GM13977 (cell line): ENCODE measurements at regions of chr5 and their contacts with region 1.

Region 1: DNA sequence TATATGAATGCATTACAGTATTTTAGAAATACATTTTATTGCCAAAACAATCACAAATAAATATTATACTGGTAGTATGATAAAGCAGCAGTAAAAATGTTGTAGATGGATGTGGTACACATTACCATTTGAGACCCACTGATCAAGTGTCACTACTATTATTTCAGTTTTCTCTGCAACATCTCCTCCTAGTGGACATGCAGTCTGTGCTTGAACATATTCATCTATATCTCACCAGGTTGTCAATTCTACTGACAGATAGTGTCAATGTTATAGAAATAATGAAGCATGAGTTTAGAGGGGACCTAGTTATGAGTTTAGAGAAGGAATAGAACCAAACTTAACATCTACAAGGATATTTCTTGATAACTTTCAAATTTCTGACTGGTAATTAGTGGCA is 39.2 kb upstream of the ELOVL7 start:
- DNase-seq: peak; percentile 44
- CTCF ChIP-seq: peak; percentile 55

Region 2: GRCh38 chr5:60604771-60605170 is 278.5 kb before region 1 on chr5:
- in situ Hi-C with region 1: no loop called
- DNase-seq: no peak
- CTCF ChIP-seq: no peak

Region 3: GRCh38 chr5:60677844-60678664 is 205.2 kb before region 1 on chr5:
- in situ Hi-C with region 1: loop called (anchors 10 kb)
- DNase-seq: peak; percentile 43
- CTCF ChIP-seq: peak; percentile 58

Region 4: DNA sequence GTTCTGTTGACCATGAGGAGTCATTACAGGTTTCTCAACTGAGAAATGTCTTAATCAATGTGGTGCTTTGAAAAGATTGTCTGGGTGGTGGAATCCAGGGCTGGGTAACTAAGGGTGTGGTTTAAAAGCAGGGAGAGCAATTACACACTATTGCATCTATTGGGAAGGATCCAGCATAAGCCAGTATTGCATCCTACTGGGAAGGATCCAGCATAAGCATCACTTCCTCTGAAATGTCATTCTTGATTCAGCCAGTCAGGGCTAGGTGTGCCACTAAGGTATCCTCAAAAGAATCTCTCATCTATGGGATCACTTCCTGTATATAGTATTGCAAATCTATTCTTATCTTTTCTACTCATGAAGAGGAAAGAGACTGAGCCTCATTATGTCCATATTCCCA is 77.8 kb before region 1 on chr5:
- in situ Hi-C with region 1: no loop called
- DNase-seq: no peak
- CTCF ChIP-seq: no peak

Region 5: GRCh38 chr5:60822285-60822556 is 61.0 kb before region 1 on chr5:
- in situ Hi-C with region 1: no loop called
- DNase-seq: peak; percentile 38
- CTCF ChIP-seq: no peak

Region 6: DNA sequence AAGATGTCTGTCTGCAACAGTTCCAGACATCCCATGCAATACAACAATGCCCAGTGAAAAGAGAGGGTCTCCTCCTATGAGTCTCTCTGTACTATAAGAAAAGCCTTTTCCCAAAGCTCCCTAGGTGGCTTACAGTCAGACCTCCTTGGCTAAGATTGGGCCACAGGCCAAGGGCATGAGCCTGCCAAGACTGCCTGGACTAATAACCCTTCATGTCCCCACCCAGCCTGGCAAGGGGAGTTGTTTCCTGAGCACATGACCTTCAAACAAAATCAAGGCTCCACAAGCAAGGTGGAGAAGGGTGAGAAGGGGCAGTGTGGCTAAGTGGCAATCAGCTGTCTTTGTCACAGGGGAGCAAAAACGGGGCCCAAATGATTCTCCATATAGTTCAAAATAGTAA is 373.2 kb after region 1 on chr5:
- in situ Hi-C with region 1: no loop called
- DNase-seq: no peak
- CTCF ChIP-seq: no peak